OCI-LY7 (cell line): ENCODE measurements at regions of chr16 and their contacts with region 1.

Region 1: DNA sequence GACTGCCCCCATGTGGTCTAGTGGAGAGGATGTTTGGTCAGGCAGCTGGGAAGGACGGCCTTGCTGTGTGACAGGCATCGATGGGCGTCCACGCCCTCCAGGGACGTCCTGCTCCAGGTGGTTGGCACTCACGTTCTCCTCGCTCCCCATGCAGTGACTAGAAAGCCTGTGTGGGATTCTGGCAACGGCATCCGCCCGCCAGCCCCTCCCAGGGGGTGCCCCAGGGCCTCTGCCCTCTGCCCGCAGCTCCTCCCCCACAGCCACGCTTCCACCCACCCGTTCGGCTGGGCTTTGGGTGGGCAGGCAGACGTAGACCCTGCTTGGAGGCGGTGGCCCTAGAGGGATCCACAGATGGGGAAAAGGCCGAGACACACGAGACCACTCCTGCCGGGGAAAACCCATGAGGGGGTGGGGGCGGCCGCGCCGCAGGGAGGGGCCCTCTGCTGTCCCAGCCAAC is 4.7 kb upstream of the IL17C start:
- DNase-seq: peak; percentile 55
- H3K4me3 ChIP-seq: peak overlapping the region; percentile 26
- H3K27ac ChIP-seq: no peak overlapping the region
- H3K4me1 ChIP-seq: peaks cover 38% of the 10 kb centered on the region
- CTCF ChIP-seq: peak; percentile 59

Region 2: DNA sequence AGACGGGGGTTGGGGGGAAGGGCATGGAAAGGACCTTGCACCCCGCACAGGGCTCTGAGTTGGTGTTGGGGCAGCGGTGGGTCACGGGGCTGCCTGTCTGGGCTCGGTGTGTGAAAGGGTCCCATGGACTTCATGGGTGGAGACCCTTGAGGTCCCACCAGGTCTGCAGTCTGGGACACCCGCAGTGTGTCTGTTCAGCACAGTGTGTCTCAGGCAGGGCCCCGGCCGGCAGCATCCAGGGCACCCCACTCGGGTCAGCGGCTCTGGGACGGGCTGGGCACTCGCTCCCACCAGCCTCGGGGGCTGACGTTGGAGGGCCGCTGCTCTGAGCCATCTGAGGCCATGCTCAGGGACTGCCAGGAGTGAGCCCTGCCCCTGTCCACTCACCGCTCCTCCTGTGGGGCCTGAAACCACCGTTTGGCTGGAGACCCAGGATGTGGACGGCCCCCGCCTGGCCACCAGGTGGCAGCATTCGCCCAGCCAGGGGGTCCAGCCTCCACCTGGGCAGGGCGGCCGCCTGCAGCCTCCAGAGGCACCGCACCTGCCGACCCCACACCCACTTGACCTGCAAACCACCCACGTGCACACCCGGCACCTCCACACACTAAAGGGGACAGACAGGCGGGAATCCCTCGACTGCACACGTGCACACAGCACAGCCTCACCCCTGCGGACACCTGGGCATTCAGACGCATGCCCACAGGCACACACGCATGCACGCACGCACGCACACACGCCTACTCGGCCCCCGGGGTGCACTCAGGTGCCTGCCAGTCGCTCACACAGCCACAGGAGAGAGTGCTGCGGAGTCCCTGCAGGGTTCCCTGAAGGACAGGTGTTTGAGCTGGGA is 190.8 kb before region 1 on chr16:
- CTCF ChIA-PET with region 1: no interaction called
- POLR2A ChIA-PET with region 1: no interaction called
- intact Hi-C with region 1: loop called (anchors 5 kb)
- DNase-seq: peak; percentile 76
- H3K4me3 ChIP-seq: no peak overlapping the region
- H3K27ac ChIP-seq: no peak overlapping the region
- H3K4me1 ChIP-seq: no peaks in the 10 kb centered on the region
- CTCF ChIP-seq: peak; percentile 88

Region 3: GRCh38 chr16:88650749-88651275 is 17.1 kb after region 1 on chr16 and contains the start of gene CYBA:
- CTCF ChIA-PET with region 1: no interaction called
- POLR2A ChIA-PET with region 1: no interaction called
- intact Hi-C with region 1: loop called (anchors 2 kb)
- DNase-seq: peak; percentile 88
- H3K4me3 ChIP-seq: peak within 1 kb of the TSS; percentile 90
- H3K27ac ChIP-seq: peak within 1 kb of the TSS; percentile 94
- H3K4me1 ChIP-seq: peaks cover 36% of the 10 kb centered on the region
- CTCF ChIP-seq: no peak
- total RNA-seq, gene CYBA: 601 and 647 TPM in 2 replicates

Region 4: DNA sequence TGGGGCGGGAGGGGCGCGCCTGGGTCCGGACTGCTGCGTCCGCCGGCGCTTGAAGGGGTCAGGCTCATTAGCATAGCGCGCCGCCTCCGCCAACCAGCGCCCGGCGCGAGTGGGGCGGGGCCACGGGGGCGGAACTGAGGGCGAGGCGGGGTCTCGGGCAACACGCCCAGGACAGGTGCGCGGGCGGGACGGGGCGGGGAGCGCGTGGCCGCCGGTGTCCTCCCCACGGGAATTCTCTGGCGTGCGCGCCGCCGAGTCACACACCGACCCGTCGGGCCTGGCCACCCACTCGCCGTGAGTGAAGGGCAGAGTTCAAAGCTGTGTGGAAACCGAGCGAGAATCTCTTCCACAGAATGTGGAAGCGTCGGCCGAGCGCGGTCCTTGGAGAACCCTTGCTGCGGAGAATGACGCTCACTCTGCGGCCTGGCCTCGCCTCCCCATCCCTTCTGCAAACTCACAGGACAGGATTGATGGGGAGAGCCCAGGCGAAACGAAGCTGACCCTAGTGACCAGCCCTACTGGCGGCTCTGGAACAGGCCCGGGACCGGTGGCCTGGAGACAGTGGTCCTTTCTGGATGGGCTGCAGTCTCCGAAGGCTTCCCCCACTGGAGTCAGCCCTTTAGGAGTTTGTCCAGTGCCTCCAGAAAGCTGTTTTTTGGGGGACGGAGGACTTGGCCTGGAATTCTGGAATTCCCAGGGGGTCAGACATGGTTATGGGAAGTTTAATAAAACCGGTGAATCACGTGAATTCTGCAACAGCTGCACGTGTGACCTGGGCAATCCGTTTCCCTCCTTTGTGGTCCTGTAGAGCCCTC is 52.9 kb after region 1 on chr16 and contains the start of gene SNAI3:
- CTCF ChIA-PET with region 1: no interaction called
- POLR2A ChIA-PET with region 1: no interaction called
- intact Hi-C with region 1: loop called (anchors 1 kb)
- DNase-seq: peak; percentile 89
- H3K4me3 ChIP-seq: peak within 1 kb of the TSS; percentile 77
- H3K27ac ChIP-seq: peak within 1 kb of the TSS; percentile 0
- H3K4me1 ChIP-seq: peaks cover 43% of the 10 kb centered on the region
- CTCF ChIP-seq: no peak
- total RNA-seq, gene SNAI3: 2.4 and 3.1 TPM in 2 replicates

Region 5: GRCh38 chr16:88700636-88701482 is 67.1 kb after region 1 on chr16:
- CTCF ChIA-PET with region 1: no interaction called
- POLR2A ChIA-PET with region 1: no interaction called
- intact Hi-C with region 1: loop called (anchors 5 kb)
- DNase-seq: peak; percentile 86
- H3K4me3 ChIP-seq: peak overlapping the region; percentile 89
- H3K27ac ChIP-seq: peak overlapping the region; percentile 71
- H3K4me1 ChIP-seq: peaks cover 67% of the 10 kb centered on the region
- CTCF ChIP-seq: no peak